ENCODE measurements at regions of chr19 and their contacts with region 1.

Region 1: DNA sequence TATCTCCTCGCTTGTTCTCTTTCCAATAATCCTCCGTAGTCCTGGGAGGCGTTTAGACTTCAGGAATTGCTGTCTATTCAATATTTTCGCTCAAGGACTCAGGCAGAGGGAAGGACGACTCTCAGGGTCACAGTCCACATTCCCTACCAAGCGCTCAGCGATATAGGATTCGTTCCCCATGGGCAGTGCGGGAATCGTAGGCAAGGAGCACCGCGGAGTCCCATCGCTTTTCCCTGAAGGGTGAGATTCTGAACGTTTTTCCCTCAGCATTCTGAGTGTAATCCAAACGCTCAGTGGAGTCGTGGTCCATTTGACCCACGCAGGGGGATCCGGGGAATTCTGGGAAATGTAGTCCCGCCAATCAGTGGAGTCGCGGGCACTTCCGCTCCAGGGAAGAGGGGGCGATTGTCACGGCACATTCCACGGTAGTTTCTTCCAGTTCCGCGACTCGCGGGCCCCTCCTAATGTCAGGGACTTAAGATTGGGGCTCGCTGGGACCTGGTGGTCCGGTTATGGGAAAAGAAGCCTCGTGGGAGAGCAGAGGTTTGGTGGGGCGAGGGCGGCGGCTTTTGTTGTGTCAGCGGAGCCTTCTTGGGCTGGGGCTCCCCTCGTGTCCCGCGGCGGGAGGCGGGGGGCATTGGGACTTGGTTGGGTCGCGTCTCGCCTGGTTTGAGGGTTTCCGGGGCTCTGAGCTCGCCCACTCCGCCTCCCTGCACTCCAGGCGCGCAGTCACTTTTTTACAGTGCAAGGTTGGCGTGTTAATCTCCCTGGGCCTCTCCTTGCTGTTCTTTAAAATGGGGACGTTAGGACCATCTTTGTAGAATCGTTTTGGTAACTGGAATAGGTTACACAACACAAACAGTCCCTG is at the start of gene ZNF234:
- DNase-seq: peak; percentile 83
- H3K4me3 ChIP-seq: peak within 1 kb of the TSS; percentile 64 to 71 (median 67)
- H3K27ac ChIP-seq: peak within 1 kb of the TSS; percentile 14
- H3K4me1 ChIP-seq: peaks cover 6% of the 10 kb centered on the region
- H3K27me3 ChIP-seq: no peaks in the 10 kb centered on the region
- CTCF ChIP-seq: no peak
- POLR2A ChIP-seq: peak; percentile 59
- total RNA-seq, gene ZNF234: 10.6 and 11.9 TPM in 2 replicates

Region 2: DNA sequence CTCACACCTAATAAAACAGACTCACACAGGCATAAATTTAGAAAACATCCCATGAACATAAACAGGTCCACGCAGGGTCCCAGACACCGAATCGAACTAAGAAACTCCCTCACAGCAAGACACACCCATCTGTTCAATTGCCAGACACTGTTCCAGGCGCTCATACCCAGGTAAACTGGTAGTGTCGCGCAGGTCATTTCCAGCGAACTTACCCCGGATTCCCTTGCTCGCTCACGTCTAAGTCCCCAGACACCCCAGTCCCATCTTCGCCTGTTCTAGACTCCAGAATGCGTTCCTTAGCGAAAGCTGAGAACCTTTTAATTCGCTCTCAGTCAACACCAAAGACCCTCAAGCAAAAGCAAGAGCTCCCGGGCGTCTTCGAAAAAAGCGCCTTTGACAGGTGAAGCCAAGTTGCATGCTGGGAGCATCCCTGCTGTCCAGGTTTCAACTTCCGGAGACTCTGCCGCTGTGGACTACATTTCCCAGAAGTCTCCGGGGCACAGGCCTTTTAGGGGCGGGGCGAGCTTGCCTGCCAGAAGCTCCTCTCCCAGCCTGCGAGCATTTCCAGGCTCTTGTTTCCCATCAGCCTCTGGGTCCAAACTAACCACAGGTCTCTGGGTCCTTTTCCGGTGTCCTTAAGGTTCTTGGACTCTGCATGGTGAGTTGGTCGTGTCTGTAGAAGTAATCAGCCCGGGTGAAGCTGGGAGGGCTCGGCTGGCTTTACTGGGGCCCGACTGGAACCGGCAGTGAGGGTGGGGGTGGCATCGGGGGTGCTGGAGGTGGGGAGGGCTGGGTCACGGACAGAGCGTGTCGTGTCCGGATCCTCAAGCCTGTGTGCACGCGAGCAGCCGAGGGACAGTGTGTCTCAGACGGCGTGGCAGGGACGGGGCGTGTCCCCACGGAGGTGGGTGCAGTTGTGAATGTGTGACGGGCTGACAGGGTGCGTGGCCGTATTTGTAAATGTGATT is 314.4 kb before region 1 on chr19 and contains the start of gene ZNF283:
- CTCF ChIA-PET with region 1: no interaction called
- POLR2A ChIA-PET with region 1: no interaction called
- dilution Hi-C with region 1: no loop called
- intact Hi-C with region 1: loop called (anchors 1 kb)
- DNase-seq: peak; percentile 79
- H3K4me3 ChIP-seq: peak within 1 kb of the TSS; percentile 68 to 94 (median 71)
- H3K27ac ChIP-seq: no peak within 1 kb of the TSS
- H3K4me1 ChIP-seq: peaks cover 4% of the 10 kb centered on the region
- H3K27me3 ChIP-seq: peaks cover 0 to 3% of the 10 kb centered on the region in 2 experiments
- CTCF ChIP-seq: no peak
- POLR2A ChIP-seq: peak; percentile 72
- total RNA-seq, gene ZNF283: 6.0 and 10.7 TPM in 2 replicates

Region 3: GRCh38 chr19:44071824-44072542 is 69.4 kb before region 1 on chr19 and contains the start of gene ZNF284:
- CTCF ChIA-PET with region 1: no interaction called
- POLR2A ChIA-PET with region 1: no interaction called
- dilution Hi-C with region 1: no loop called
- intact Hi-C with region 1: loop called (anchors 2 kb)
- DNase-seq: peak; percentile 91
- H3K4me3 ChIP-seq: peak within 1 kb of the TSS; percentile 10 to 67 (median 55)
- H3K27ac ChIP-seq: peak within 1 kb of the TSS; percentile 14
- H3K4me1 ChIP-seq: peaks cover 10% of the 10 kb centered on the region
- H3K27me3 ChIP-seq: no peaks in the 10 kb centered on the region
- CTCF ChIP-seq: no peak
- POLR2A ChIP-seq: peak; percentile 64
- total RNA-seq, gene ZNF284: 2.4 and 2.7 TPM in 2 replicates

Measured in endothelial cell of umbilical vein (primary cell).